Gastrocnemius medialis (tissue), 4 donors: ENCODE measurements at regions of chr10 and their contacts with region 1.

Region 1: GRCh38 chr10:95517536-95518454 is 43.4 kb downstream of the SORBS1 start:
- DNase-seq: no peak
- ATAC-seq: no peak
- H3K4me3 ChIP-seq: no peak overlapping the region
- H3K27ac ChIP-seq: peak overlapping the region; percentile 72 to 92 (median 80)
- H3K4me1 ChIP-seq: peaks cover 69 to 83% of the 10 kb centered on the region in 2 donors
- H3K27me3 ChIP-seq: no peaks in the 10 kb centered on the region
- CTCF ChIP-seq: no peak
- POLR2A ChIP-seq: no peak

Region 2: DNA sequence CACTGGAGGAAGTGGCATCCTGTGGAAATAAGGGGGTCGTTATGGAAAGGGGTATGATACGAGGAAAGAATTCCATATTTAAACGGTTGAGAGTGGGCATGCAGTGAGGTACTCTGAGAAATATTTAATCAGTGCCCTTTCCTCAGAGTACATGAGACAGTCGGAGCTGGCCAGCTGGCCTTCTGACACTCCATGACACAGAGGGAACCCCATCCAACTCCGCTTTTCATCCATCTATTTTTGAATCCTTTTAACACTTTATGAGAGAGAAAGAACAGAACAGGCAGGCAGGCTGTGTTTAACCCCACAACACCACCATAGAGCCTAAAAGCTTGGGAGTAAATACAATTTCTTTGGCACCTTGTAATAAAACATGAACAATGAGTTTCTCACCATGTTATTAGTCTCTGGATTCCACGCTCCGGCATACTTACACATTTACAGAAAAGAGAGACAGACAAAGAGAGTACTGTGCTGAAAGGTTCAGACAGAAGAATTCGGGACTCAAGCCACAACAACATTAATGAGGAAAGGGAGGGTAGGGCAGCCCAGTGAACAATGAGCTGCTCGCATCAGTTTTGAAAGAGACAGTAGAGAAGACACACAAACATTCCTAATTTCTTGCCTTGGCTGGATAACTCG is 102.8 kb before region 1 on chr10:
- in situ Hi-C with region 1: no loop called
- intact Hi-C with region 1: loop called (anchors 5 kb)
- DNase-seq: peak; percentile 67 to 80
- ATAC-seq: peak; percentile 75 to 84
- H3K4me3 ChIP-seq: peak overlapping the region; percentile 55 to 71 (median 62)
- H3K27ac ChIP-seq: peak overlapping the region; percentile 91 to 98 (median 97)
- H3K4me1 ChIP-seq: peaks cover 51 to 54% of the 10 kb centered on the region in 2 donors
- H3K27me3 ChIP-seq: no peaks in the 10 kb centered on the region
- CTCF ChIP-seq: no peak
- POLR2A ChIP-seq: peak; percentile 44 to 47

Region 3: GRCh38 chr10:95467162-95467599 is 50.6 kb before region 1 on chr10:
- in situ Hi-C with region 1: no loop called
- intact Hi-C with region 1: loop called (anchors 2 kb)
- DNase-seq: peak; percentile 64 to 86
- ATAC-seq: peak; percentile 75 to 91
- H3K4me3 ChIP-seq: no peak overlapping the region
- H3K27ac ChIP-seq: peak overlapping the region; percentile 92 to 99 (median 95)
- H3K4me1 ChIP-seq: peaks cover 73 to 89% of the 10 kb centered on the region in 2 donors
- H3K27me3 ChIP-seq: no peaks in the 10 kb centered on the region
- CTCF ChIP-seq: peak in 1 of 5 experiments; percentile 43
- POLR2A ChIP-seq: peak in 1 of 2 donors; percentile 36

Region 4: GRCh38 chr10:95814011-95814727 is 296.4 kb after region 1 on chr10:
- in situ Hi-C with region 1: no loop called
- intact Hi-C with region 1: no loop called
- DNase-seq: no peak
- ATAC-seq: peak in 1 of 2 donors; percentile 39
- H3K4me3 ChIP-seq: no peak overlapping the region
- H3K27ac ChIP-seq: no peak overlapping the region
- H3K4me1 ChIP-seq: no peaks in the 10 kb centered on the region
- H3K27me3 ChIP-seq: no peaks in the 10 kb centered on the region
- CTCF ChIP-seq: no peak
- POLR2A ChIP-seq: no peak